ENCODE measurements at regions of chr2 and their contacts with region 1.

Region 1: DNA sequence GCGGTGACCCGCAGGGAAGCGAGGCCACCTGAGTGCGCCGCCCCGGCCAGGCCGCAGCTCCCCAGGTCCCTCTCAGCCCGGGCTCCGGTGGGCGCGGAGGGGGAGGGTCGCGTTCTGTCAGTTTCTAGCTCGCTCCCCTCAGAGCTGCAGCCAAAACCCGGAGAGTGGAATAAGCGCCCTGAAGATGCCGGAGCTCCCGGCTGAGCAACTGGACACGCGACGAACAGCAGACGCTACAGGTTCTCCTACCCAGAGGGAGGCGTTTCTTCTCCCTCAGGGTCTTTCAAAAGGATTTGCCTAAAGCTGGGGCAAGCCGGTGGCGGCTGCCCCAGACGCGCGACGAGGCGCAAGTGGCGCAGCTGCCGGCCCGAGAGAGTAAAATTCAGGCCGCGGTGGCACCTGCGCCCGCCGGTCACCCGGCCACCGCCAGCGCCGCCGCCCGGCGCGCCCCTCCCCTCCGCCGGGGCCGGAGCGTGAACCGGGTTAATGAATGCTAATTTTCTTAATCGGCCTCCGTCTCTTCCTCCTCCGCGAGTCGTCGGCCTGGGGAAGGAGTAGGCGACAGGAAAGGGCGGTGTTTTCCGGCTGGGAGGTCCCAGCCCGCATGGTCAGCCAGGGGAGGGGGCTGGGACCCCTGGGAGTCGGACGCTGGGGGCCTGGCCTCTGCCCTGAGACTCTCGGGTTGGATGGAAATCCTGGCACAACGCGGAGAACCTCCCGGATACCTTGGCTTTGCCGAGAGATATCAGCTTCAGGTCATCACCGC is 845 bp upstream of the CDC42EP3 start:
- DNase-seq: peak; percentile 82
- H3K4me3 ChIP-seq: peak overlapping the region; percentile 83 to 97 (median 94)
- H3K27ac ChIP-seq: peak overlapping the region; percentile 93 to 99 (median 96)
- H3K4me1 ChIP-seq: peaks cover 0 to 40% (median 16%) of the 10 kb centered on the region in 4 donors
- H3K27me3 ChIP-seq: no peaks in the 10 kb centered on the region
- CTCF ChIP-seq: no peak
- EP300 ChIP-seq: peak in 1 of 4 donors; percentile 4
- POLR2A ChIP-seq: peak; percentile 24 to 25

Region 2: DNA sequence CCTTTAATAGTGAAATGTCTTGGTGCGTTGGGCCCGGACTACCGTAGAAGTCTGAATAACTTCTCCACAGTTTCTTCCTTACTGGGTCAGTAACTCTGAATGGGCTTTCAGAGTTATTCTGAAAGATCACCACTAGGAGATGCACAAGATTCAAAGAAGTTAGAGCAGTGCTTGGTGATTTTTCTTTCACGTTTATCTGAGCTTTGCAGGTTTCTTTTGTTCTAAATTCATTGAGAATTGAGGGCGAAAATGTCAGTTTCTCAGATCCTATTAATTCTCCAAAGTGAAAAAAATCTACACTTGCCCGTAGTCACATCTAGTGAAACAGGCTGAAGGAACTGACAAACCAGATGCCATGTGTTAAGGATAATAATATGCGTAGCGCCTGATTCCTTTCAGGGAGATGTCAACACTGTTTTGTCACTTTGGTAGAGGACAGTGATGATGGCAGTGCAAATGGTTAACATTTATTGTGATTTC is 257.8 kb before region 1 on chr2:
- intact Hi-C with region 1: loop called (anchors 2 kb)
- DNase-seq: peak; percentile 74
- H3K4me3 ChIP-seq: no peak overlapping the region
- H3K27ac ChIP-seq: peak overlapping the region; percentile 48 to 76 (median 62)
- H3K4me1 ChIP-seq: peaks cover 0 to 28% (median 22%) of the 10 kb centered on the region in 4 donors
- H3K27me3 ChIP-seq: no peaks in the 10 kb centered on the region
- CTCF ChIP-seq: peak; percentile 80 to 98 (median 96)
- EP300 ChIP-seq: no peak
- POLR2A ChIP-seq: no peak

Region 3: GRCh38 chr2:37506407-37507050 is 165.8 kb before region 1 on chr2:
- intact Hi-C with region 1: loop called (anchors 5 kb)
- DNase-seq: peak; percentile 64
- H3K4me3 ChIP-seq: no peak overlapping the region
- H3K27ac ChIP-seq: peak overlapping the region; percentile 60 to 83 (median 78)
- H3K4me1 ChIP-seq: peaks cover 0 to 31% (median 24%) of the 10 kb centered on the region in 4 donors
- H3K27me3 ChIP-seq: no peaks in the 10 kb centered on the region
- CTCF ChIP-seq: peak in 1 of 4 experiments; percentile 9
- EP300 ChIP-seq: peak; percentile 67 to 85 (median 78)
- POLR2A ChIP-seq: no peak

Region 4: DNA sequence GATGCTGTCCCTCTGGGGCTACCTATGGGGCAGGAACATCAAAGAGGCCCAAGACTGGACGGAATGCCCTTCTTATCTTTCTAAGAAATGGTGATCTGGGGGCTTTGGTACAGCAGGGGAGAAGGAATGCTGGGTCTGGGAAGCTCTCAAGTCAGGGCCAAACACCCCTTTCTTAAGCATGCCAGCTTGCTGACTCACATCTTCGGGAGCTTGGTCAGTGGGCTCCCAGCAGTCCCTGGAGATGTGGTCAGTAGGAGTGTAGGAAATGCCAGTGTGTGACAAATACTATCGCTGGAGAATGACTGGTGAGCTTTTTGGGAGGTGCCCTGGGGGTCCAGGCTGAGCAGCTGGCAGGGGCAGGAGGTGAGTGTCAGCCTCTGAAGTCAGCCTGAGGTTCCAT is 104.2 kb after region 1 on chr2:
- intact Hi-C with region 1: loop called (anchors 2 kb)
- DNase-seq: no peak
- H3K4me3 ChIP-seq: no peak overlapping the region
- H3K27ac ChIP-seq: peak overlapping the region; percentile 80 to 88 (median 82)
- H3K4me1 ChIP-seq: peaks cover 0 to 100% (median 98%) of the 10 kb centered on the region in 4 donors
- H3K27me3 ChIP-seq: no peaks in the 10 kb centered on the region
- CTCF ChIP-seq: no peak
- EP300 ChIP-seq: no peak
- POLR2A ChIP-seq: no peak

Region 5: DNA sequence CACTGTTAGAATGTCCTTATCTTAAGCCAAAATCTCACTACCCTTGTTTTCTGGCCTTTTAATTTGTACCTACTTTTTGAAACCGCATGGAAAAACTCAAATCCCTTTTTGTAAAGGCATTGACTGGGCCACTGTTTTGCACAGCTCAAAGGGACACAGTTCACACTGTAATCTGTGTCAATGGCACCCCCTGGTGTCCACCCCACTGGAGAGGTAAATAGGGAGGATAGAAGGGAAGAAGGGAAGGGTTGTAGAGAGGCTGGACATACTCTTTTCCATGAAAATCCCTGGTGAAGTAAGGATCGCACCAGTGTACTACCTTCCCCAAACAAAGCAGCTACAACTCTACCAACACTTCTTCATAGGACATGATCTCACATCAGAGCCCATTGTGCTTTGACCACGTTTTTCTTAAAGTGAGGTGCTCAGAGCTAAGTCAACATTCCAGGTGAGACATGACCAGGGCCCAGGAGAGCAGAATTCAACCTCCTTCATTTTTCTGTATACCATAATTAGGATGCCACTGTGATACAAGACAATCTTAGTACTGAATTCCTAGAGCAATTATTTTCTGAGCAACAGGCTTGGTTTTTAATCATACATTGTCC is 160.4 kb after region 1 on chr2:
- intact Hi-C with region 1: loop called (anchors 2 kb)
- DNase-seq: peak; percentile 94
- H3K4me3 ChIP-seq: no peak overlapping the region
- H3K27ac ChIP-seq: peak overlapping the region in 3 of 4 donors; percentile 44 to 71 (median 59)
- H3K4me1 ChIP-seq: peaks cover 0 to 57% (median 31%) of the 10 kb centered on the region in 4 donors
- H3K27me3 ChIP-seq: no peaks in the 10 kb centered on the region
- CTCF ChIP-seq: peak; percentile 81 to 92 (median 88)
- EP300 ChIP-seq: no peak
- POLR2A ChIP-seq: no peak

Region 6: GRCh38 chr2:37843556-37843955 is 171.3 kb after region 1 on chr2:
- intact Hi-C with region 1: no loop called
- DNase-seq: no peak
- H3K4me3 ChIP-seq: no peak overlapping the region
- H3K27ac ChIP-seq: peak overlapping the region in 2 of 4 donors; percentile 0 to 63
- H3K4me1 ChIP-seq: peaks cover 0 to 22% (median 16%) of the 10 kb centered on the region in 4 donors
- H3K27me3 ChIP-seq: no peaks in the 10 kb centered on the region
- CTCF ChIP-seq: no peak
- EP300 ChIP-seq: no peak
- POLR2A ChIP-seq: no peak

Region 7: DNA sequence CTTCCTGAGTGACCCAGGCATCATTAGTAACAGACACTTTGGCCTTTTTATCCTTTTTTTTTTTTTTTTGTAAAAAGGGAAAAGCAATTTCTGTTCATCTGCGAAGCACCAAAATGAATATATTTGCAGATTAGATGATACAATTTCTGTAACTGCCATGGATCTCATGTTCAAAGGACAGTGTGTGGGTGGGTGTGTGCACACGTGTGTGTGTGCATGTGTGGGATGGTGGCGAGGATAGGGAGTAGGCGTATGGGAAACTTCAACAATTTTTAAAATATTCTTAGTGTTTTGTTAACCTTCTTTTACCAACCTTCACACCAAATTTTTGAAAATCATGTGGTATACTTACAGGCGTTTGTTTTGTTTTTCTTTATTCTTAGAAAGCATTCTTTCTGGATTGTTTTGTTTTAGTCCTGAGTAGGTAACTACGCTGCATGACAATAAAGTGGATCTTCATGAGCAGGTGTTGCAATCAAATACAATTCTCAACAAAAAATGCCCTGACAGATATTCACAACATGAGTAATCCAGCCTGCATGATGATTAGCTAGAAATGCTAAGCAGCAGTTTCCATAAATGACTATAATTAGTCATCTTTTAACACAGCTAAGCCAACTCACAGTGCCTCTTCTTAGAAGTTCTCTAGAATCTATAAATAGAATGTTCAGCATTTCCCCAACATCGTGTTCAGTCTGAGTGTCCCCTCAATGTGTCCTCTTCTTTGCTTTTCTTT is 199.3 kb after region 1 on chr2:
- intact Hi-C with region 1: loop called (anchors 5 kb)
- DNase-seq: no peak
- H3K4me3 ChIP-seq: no peak overlapping the region
- H3K27ac ChIP-seq: peak overlapping the region; percentile 78 to 88 (median 84)
- H3K4me1 ChIP-seq: peaks cover 0 to 67% (median 53%) of the 10 kb centered on the region in 4 donors
- H3K27me3 ChIP-seq: no peaks in the 10 kb centered on the region
- CTCF ChIP-seq: no peak
- EP300 ChIP-seq: peak in 2 of 4 donors; percentile 15
- POLR2A ChIP-seq: no peak

Measured in sigmoid colon (tissue), 7 donors.